ENCODE measurements at regions of chr9 and their contacts with region 1.

Region 1: GRCh38 chr9:26892251-26893029 is at the start of gene CAAP1:
- DNase-seq: peak; percentile 95
- ATAC-seq: peak; percentile 94
- H3K4me3 ChIP-seq: peak within 1 kb of the TSS; percentile 81 to 100 (median 100)
- H3K4me3 Mint-ChIP-seq: peak within 1 kb of the TSS; percentile 100
- H3K27ac ChIP-seq: peak within 1 kb of the TSS; percentile 95 to 96
- H3K27ac Mint-ChIP-seq: peak within 1 kb of the TSS; percentile 99
- H3K4me1 ChIP-seq: peaks cover 18 to 19% of the 10 kb centered on the region in 2 donors
- H3K4me1 Mint-ChIP-seq: peaks cover 37% of the 10 kb centered on the region
- H3K27me3 ChIP-seq: no peaks in the 10 kb centered on the region
- H3K27me3 Mint-ChIP-seq: no peaks in the 10 kb centered on the region
- CTCF ChIP-seq: peak; percentile 41
- total RNA-seq, gene CAAP1: 13.3 and 15.7 TPM in 2 replicates

Region 2: DNA sequence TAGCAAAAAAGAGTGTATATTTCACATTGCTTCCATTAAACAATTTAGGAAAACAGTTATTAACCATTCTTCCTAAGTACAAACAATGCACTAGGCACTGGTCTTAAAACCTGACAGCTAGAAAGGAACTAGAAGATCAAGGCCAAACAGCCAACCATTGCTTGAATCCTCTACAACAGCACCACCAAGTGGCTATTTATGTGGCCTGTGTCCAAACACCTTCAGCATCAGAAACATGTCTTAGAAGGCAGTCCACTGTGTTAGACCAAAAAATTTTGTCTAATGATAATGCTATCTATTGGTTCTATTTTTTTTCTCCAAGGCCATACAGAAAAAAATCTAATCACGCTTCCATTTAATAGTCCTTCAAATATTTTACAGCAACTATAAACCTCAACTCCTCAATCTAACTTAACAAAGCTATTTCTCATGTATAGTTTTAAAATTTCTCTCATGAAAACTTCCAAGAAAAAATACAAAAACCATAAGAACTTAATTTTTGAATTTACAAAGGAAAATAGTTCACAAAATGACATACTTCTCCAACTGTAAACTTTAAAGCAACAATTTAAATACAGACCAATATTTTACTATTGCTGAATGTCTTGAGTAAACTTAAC is 35.9 kb before region 1 on chr9:
- CTCF ChIA-PET with region 1: no interaction called
- POLR2A ChIA-PET with region 1: no interaction called
- intact Hi-C with region 1: no loop called
- DNase-seq: peak; percentile 7
- ATAC-seq: no peak
- H3K4me3 ChIP-seq: no peak overlapping the region
- H3K4me3 Mint-ChIP-seq: no peak overlapping the region
- H3K27ac ChIP-seq: no peak overlapping the region
- H3K27ac Mint-ChIP-seq: no peak overlapping the region
- H3K4me1 ChIP-seq: no peaks in the 10 kb centered on the region
- H3K4me1 Mint-ChIP-seq: no peaks in the 10 kb centered on the region
- H3K27me3 ChIP-seq: no peaks in the 10 kb centered on the region
- H3K27me3 Mint-ChIP-seq: no peaks in the 10 kb centered on the region
- CTCF ChIP-seq: peak; percentile 35

Region 3: DNA sequence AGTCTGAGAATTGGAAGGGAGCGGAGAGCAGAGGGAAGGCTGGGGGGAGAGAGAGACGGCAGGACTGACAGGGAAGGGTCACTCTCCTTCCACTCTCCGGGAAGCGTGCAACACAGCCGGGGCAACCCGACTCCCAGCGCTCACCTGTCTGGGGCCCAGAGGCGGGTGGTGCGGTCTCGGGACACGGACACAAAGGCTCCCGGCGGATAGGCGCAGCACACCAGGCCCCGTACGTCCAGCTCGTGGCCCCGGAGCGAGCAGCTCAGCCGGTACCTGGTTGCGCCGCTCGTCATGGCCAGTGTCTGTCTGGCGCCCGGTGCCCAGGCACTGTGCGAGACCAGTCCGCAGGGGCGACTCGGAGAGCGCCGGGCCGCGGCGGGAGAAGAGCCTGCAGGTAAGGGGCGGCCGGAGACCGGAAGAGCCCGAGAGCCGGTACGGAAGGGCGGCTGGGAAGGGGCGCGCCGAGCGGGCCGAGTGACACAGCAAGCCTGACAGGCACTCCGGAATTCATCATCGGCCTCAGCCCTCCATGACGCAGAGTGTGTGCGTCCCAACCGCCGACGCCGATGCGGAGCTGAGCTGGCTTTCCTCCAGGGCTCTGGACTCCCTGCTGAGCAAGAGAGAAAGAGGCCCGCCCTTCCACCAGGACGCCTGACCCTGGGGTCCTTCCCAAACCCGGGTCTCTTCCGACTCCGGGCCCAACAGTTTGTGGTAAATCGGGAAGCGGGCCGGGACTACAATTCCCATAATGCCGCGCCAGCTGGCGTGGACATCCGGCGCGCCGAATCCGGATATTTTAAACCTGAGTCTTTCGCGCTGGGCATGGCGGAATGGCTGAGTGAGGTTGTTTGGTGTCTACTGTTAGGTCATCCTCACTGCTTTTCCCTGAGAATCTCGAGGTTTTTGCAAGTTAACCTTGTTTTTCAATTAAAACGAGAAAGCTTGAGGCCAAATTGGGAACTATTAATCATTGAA is 54.6 kb after region 1 on chr9 and contains the start of gene PLAA:
- CTCF ChIA-PET with region 1: interaction called, 11 read pairs
- POLR2A ChIA-PET with region 1: interaction called, 8 read pairs
- intact Hi-C with region 1: loop called (anchors 1 kb)
- DNase-seq: peak; percentile 93
- ATAC-seq: peak; percentile 96
- H3K4me3 ChIP-seq: peak within 1 kb of the TSS; percentile 80 to 98 (median 89)
- H3K4me3 Mint-ChIP-seq: peak within 1 kb of the TSS; percentile 94
- H3K27ac ChIP-seq: peak within 1 kb of the TSS; percentile 95 to 96
- H3K27ac Mint-ChIP-seq: peak within 1 kb of the TSS; percentile 96
- H3K4me1 ChIP-seq: peaks cover 20% of the 10 kb centered on the region in 2 donors
- H3K4me1 Mint-ChIP-seq: peaks cover 46% of the 10 kb centered on the region
- H3K27me3 ChIP-seq: no peaks in the 10 kb centered on the region
- H3K27me3 Mint-ChIP-seq: peaks cover 7% of the 10 kb centered on the region
- CTCF ChIP-seq: no peak
- total RNA-seq, gene PLAA: 22.5 and 24.0 TPM in 2 replicates

Region 4: GRCh38 chr9:26955921-26956859 is 63.8 kb after region 1 on chr9 and contains the start of gene IFT74:
- CTCF ChIA-PET with region 1: interaction called, 3 read pairs
- POLR2A ChIA-PET with region 1: interaction called, 4 read pairs
- intact Hi-C with region 1: loop called (anchors 1 kb)
- DNase-seq: peak; percentile 95
- ATAC-seq: peak; percentile 100
- H3K4me3 ChIP-seq: peak within 1 kb of the TSS; percentile 64 to 86 (median 83)
- H3K4me3 Mint-ChIP-seq: peak within 1 kb of the TSS; percentile 98
- H3K27ac ChIP-seq: peak within 1 kb of the TSS; percentile 60 to 82
- H3K27ac Mint-ChIP-seq: peak within 1 kb of the TSS; percentile 98
- H3K4me1 ChIP-seq: peaks cover 12 to 13% of the 10 kb centered on the region in 2 donors
- H3K4me1 Mint-ChIP-seq: peaks cover 32% of the 10 kb centered on the region
- H3K27me3 ChIP-seq: no peaks in the 10 kb centered on the region
- H3K27me3 Mint-ChIP-seq: no peaks in the 10 kb centered on the region
- CTCF ChIP-seq: no peak
- total RNA-seq, gene IFT74: 19.1 and 22.6 TPM in 2 replicates

Region 5: GRCh38 chr9:27227192-27227591 is 334.8 kb after region 1 on chr9:
- CTCF ChIA-PET with region 1: no interaction called
- POLR2A ChIA-PET with region 1: no interaction called
- intact Hi-C with region 1: no loop called
- DNase-seq: no peak
- ATAC-seq: no peak
- H3K4me3 ChIP-seq: no peak overlapping the region
- H3K4me3 Mint-ChIP-seq: no peak overlapping the region
- H3K27ac ChIP-seq: no peak overlapping the region
- H3K27ac Mint-ChIP-seq: no peak overlapping the region
- H3K4me1 ChIP-seq: no peaks in the 10 kb centered on the region
- H3K4me1 Mint-ChIP-seq: no peaks in the 10 kb centered on the region
- H3K27me3 ChIP-seq: peaks cover 0 to 2% (median 0%) of the 10 kb centered on the region in 4 experiments
- H3K27me3 Mint-ChIP-seq: no peaks in the 10 kb centered on the region
- CTCF ChIP-seq: no peak

Region 6: DNA sequence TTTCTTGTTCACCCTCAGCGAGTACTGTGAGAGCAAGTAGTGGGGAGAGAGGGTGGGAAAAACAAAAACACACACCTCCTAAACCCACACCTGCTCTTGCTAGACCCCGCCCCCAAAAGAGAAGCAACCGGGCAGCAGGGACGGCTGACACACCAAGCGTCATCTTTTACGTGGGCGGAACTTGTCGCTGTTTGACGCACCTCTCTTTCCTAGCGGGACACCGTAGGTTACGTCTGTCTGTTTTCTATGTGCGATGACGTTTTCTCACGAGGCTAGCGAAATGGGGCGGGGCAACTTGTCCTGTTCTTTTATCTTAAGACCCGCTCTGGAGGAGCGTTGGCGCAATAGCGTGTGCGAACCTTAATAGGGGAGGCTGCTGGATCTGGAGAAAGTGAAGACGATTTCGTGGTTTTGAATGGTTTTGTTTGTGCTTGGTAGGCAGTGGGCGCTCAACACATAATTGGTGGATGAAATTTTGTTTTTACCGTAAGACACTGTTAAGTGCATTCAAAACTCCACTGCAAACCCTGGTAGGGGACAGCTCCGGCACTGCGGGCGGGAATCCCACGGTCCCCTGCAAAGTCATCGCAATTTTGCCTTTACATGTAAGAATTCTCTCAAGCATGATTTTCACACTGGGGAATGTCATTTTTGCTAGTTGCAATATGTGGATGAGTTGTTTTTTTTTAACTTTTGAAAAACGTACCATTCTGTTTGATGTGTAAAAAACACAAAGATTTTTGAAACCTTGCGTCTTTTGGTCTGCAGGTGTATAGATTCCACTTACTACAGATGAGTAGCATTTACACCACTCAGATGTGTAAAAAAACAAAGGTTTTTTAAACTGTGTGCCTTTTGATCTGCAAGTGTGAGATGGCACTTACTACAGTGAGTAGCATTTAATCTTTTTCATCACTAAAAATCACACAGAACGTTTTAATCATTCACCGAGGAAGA is 681.5 kb after region 1 on chr9:
- CTCF ChIA-PET with region 1: no interaction called
- POLR2A ChIA-PET with region 1: no interaction called
- intact Hi-C with region 1: loop called (anchors 5 kb)
- DNase-seq: peak; percentile 100
- ATAC-seq: peak; percentile 84
- H3K4me3 ChIP-seq: peak overlapping the region; percentile 81 to 94 (median 92)
- H3K4me3 Mint-ChIP-seq: peak overlapping the region; percentile 98
- H3K27ac ChIP-seq: peak overlapping the region; percentile 97 to 99
- H3K27ac Mint-ChIP-seq: peak overlapping the region; percentile 100
- H3K4me1 ChIP-seq: peaks cover 16 to 19% of the 10 kb centered on the region in 2 donors
- H3K4me1 Mint-ChIP-seq: peaks cover 27% of the 10 kb centered on the region
- H3K27me3 ChIP-seq: no peaks in the 10 kb centered on the region
- H3K27me3 Mint-ChIP-seq: no peaks in the 10 kb centered on the region
- CTCF ChIP-seq: no peak